Heart left ventricle (tissue), 16 donors: ENCODE measurements at regions of chr7 and their contacts with region 1.

Region 1: GRCh38 chr7:6435486-6436384 is 12.0 kb downstream of the DAGLB start:
- DNase-seq: peak; percentile 75 to 90 (median 80)
- ATAC-seq: peak; percentile 69 to 86 (median 84)
- H3K4me3 ChIP-seq: peak overlapping the region in 8 of 12 donors; percentile 0 to 42 (median 14)
- H3K27ac ChIP-seq: peak overlapping the region in 11 of 12 donors; percentile 24 to 77 (median 46)
- H3K4me1 ChIP-seq: peaks cover 0 to 85% (median 29%) of the 10 kb centered on the region in 12 donors
- H3K27me3 ChIP-seq: no peaks in the 10 kb centered on the region
- CTCF ChIP-seq: peak; percentile 93 to 98 (median 97)
- POLR2A ChIP-seq: no peak

Region 2: DNA sequence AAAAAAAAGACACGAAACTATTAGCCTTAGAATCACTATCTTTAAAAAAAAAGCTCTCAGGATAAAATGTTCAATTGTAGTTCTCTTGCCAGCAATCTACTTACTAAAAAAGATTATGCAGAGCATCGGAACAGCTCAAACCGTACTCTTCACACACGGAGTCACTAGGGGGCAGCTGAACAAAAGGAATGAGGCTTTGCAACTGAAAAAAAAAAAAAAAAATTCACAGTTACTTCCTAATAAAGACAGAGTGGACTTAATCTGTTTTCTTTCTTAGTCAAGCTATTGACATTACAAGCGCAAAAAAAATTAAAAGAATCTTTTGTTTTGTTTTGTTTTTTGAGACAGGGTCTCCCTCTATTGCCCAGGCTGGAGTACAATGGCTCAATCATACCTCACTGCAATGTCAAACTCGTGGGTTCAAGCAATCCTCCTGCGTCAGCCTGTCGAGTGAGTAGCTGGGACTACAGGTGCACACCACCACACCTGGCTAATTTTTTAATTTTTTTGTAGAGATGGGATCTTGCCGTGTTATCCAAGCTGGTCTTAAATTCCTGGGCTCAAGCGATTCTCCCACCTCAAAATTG is 438.4 kb before region 1 on chr7:
- intact Hi-C with region 1: loop called in 4 of 10 experiments (anchors 5 to 10 kb)
- DNase-seq: peak in 4 of 5 donors; percentile 24 to 45 (median 35)
- ATAC-seq: peak in 3 of 4 donors; percentile 70 to 76 (median 71)
- H3K4me3 ChIP-seq: no peak overlapping the region
- H3K27ac ChIP-seq: no peak overlapping the region
- H3K4me1 ChIP-seq: peaks cover 0 to 3% (median 0%) of the 10 kb centered on the region in 12 donors
- H3K27me3 ChIP-seq: no peaks in the 10 kb centered on the region
- CTCF ChIP-seq: peak; percentile 31 to 79 (median 66)
- POLR2A ChIP-seq: no peak

Region 3: GRCh38 chr7:6160191-6160623 is 275.5 kb before region 1 on chr7:
- intact Hi-C with region 1: loop called in 1 of 10 experiments (anchors 10 kb)
- DNase-seq: peak in 4 of 5 donors; percentile 69 to 78 (median 73)
- ATAC-seq: peak; percentile 14 to 73 (median 61)
- H3K4me3 ChIP-seq: no peak overlapping the region
- H3K27ac ChIP-seq: peak overlapping the region in 11 of 12 donors; percentile 2 to 58 (median 47)
- H3K4me1 ChIP-seq: peaks cover 3 to 59% (median 34%) of the 10 kb centered on the region in 12 donors
- H3K27me3 ChIP-seq: no peaks in the 10 kb centered on the region
- CTCF ChIP-seq: peak; percentile 52 to 84 (median 74)
- POLR2A ChIP-seq: no peak

Region 4: GRCh38 chr7:6385110-6385971 is 50.4 kb before region 1 on chr7:
- intact Hi-C with region 1: loop called in 1 of 10 experiments (anchors 10 kb)
- DNase-seq: no peak
- ATAC-seq: peak in 3 of 4 donors; percentile 62 to 80 (median 72)
- H3K4me3 ChIP-seq: no peak overlapping the region
- H3K27ac ChIP-seq: peak overlapping the region in 9 of 12 donors; percentile 10 to 82 (median 53)
- H3K4me1 ChIP-seq: peaks cover 8 to 92% (median 75%) of the 10 kb centered on the region in 12 donors
- H3K27me3 ChIP-seq: no peaks in the 10 kb centered on the region
- CTCF ChIP-seq: no peak
- POLR2A ChIP-seq: no peak

Region 5: DNA sequence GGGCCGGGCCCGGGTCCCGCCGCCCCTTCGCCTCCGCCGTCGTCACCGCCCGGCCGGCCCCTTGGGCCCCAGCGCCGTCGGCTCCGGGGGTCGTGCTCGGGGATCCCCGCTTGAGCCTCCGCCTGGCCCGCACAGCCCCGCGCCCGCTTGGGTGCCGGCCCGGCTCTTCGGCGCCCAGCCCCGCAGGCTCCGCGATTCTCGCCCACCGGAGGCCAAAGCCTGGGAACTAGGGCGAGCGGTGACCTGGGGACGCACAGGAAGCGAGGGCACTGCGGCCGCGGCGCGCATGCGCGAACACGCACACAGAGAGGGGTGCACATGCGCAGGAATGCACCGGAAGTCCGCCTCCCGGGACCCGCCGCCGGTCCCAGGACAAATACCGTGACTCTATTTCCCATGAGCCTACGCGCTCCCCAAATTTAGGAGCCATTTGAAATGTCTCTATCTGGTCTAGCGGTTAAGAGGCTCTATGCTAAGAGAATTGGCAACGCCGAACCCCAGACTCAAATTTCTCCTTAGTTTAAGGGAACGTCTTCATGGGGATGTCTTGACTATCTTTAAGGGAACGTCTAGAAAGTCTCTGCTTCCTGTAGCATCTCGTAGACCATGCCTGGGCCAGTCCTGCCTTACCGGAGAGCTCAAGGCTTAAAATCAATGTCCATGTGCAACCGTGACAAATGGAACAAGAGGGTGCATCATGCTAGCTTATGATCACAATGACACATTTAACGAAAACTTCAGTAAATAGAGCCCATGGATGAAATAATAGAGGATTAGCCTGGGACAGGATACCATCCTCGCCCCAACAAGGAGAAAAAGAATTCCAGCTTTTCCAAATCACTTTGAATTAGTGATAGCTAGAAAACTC is 271.2 kb after region 1 on chr7 and contains the start of gene ZNF12:
- intact Hi-C with region 1: no loop called
- DNase-seq: peak; percentile 97 to 99 (median 98)
- ATAC-seq: peak; percentile 98 to 100 (median 99)
- H3K4me3 ChIP-seq: peak within 1 kb of the TSS; percentile 56 to 99 (median 88)
- H3K27ac ChIP-seq: peak within 1 kb of the TSS; percentile 82 to 98 (median 93)
- H3K4me1 ChIP-seq: peaks cover 0 to 40% (median 33%) of the 10 kb centered on the region in 12 donors
- H3K27me3 ChIP-seq: no peaks in the 10 kb centered on the region
- CTCF ChIP-seq: no peak
- POLR2A ChIP-seq: peak in 1 of 2 donors; percentile 76
- total RNA-seq, gene ZNF12: 11.4 to 20.1 (median 15.0) TPM